GM13977 (cell line): ENCODE measurements at regions of chr1 and their contacts with region 1.

Region 1: GRCh38 chr1:100459358-100460114 is 78.4 kb upstream of the GPR88 start:
- DNase-seq: peak; percentile 45
- CTCF ChIP-seq: peak; percentile 93

Region 2: GRCh38 chr1:100866041-100866900 is 406.7 kb after region 1 on chr1:
- in situ Hi-C with region 1: loop called (anchors 10 kb)
- DNase-seq: peak; percentile 5
- CTCF ChIP-seq: peak; percentile 57